Activated CD4-positive, alpha-beta T cell treated with anti-CD3 and anti-CD28 coated beads for 36 hours (primary cell): ENCODE measurements at regions of chr14 and their contacts with region 1.

Region 1: DNA sequence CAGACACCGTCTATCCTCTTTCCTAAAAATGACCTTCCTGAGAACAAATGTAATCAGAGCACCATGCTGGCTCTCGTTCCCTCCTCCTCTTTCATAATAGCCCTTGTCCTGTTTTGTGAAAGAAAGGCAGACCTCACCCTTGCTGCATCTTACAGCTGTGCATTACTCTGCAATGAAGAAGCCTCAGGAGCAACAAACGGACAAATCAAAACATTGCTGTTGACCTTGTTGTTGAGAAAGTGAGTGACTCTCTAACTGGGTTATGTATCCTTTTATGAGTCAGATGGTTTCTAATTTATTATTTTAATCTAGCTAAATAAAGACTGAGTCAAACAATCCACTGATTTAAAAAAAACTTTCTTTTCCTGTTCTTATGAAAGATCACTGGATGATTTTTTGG is 180.9 kb downstream of the RPS29 start:
- DNase-seq: no peak
- ATAC-seq: peak; percentile 91
- H3K4me3 Mint-ChIP-seq: no peak overlapping the region
- H3K27ac Mint-ChIP-seq: no peak overlapping the region
- H3K4me1 Mint-ChIP-seq: peaks cover 10% of the 10 kb centered on the region
- H3K27me3 Mint-ChIP-seq: peaks cover 10% of the 10 kb centered on the region

Region 2: GRCh38 chr14:49420201-49420600 is 14.9 kb after region 1 on chr14:
- CTCF ChIA-PET with region 1: interaction called, 6 read pairs
- POLR2A ChIA-PET with region 1: no interaction called
- intact Hi-C with region 1: loop called (anchors 1 kb)
- DNase-seq: peak; percentile 68
- ATAC-seq: peak; percentile 82
- H3K4me3 Mint-ChIP-seq: no peak overlapping the region
- H3K27ac Mint-ChIP-seq: peak overlapping the region; percentile 81
- H3K4me1 Mint-ChIP-seq: peaks cover 33% of the 10 kb centered on the region
- H3K27me3 Mint-ChIP-seq: peaks cover 39% of the 10 kb centered on the region

Region 3: GRCh38 chr14:50272503-50272902 is 867.2 kb after region 1 on chr14:
- CTCF ChIA-PET with region 1: no interaction called
- POLR2A ChIA-PET with region 1: no interaction called
- intact Hi-C with region 1: no loop called
- DNase-seq: no peak
- ATAC-seq: no peak
- H3K4me3 Mint-ChIP-seq: no peak overlapping the region
- H3K27ac Mint-ChIP-seq: no peak overlapping the region
- H3K4me1 Mint-ChIP-seq: no peaks in the 10 kb centered on the region
- H3K27me3 Mint-ChIP-seq: no peaks in the 10 kb centered on the region